ENCODE measurements at regions of chr1 and their contacts with region 1.

Region 1: GRCh38 chr1:48498096-48498791 is 26.2 kb upstream of the SPATA6 start:
- H3K4me3 ChIP-seq: no peak overlapping the region
- H3K27ac ChIP-seq: no peak overlapping the region
- H3K4me1 ChIP-seq: 0 out of 2 replicates have a peak, but pooled peaks cover 3% of the 10 kb centered on the region
- CTCF ChIP-seq: peak; percentile 72

Region 2: DNA sequence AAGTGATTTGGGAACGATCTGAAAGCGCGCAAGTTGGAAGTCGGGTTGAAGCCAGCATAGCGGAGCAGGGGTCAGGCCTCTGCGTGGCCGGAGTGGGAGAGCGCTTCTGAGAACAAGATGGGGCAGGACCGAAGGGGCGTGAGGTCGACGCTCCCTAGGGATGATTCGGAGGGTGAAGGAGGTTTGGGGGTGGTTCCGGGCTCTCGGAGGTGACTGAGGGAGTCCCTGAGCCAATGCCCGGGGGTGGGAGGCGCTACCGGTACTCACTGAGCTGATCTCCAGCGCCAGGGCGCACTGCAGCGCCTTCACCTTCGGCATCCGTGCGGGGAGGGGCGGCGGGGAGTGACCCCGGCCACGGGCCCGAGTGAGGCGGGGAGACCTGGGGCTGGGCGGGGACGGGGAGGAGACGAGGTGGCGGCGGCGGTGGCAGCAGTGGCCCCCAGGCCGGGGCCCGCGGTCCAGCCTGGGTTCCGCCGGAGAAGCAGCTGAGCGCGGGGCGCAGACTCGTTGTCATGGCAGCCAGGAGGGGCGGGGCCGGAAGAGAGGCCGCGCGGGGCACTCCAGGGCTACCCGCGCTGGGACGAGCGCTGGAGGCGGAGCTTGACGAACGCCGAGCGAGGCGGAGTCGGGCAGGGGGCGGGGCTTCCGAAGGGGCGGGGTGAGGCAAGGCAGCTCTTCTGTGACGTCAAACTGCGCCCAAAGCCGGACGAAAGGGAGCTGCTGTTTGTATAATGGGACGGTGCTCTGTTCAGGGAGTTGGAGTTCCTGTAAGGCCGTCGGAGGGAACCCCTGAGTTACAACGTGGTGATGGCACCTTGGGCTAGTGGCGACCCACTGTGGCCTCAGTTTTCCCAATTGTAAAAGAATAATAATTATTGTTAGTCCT is 26.3 kb before region 1 on chr1 and contains the start of gene SPATA6:
- CTCF ChIA-PET with region 1: interaction called, 21 read pairs
- POLR2A ChIA-PET with region 1: interaction called, 6 read pairs
- H3K4me3 ChIP-seq: peak within 1 kb of the TSS; percentile 78
- H3K27ac ChIP-seq: peak within 1 kb of the TSS; percentile 42; the same call in 1 of the 2 replicates
- H3K4me1 ChIP-seq: no peaks in the 10 kb centered on the region; the same call in 1 of the 2 replicates
- CTCF ChIP-seq: peak; percentile 51

Region 3: GRCh38 chr1:48480504-48480903 is 17.7 kb before region 1 on chr1:
- CTCF ChIA-PET with region 1: interaction called, 11 read pairs
- POLR2A ChIA-PET with region 1: no interaction called
- H3K4me3 ChIP-seq: no peak overlapping the region
- H3K27ac ChIP-seq: no peak overlapping the region
- H3K4me1 ChIP-seq: peaks cover 4% of the 10 kb centered on the region; the same call in 1 of the 2 replicates
- CTCF ChIP-seq: no peak

Region 4: GRCh38 chr1:48530727-48531351 is 32.6 kb after region 1 on chr1:
- CTCF ChIA-PET with region 1: interaction called, 27 read pairs
- POLR2A ChIA-PET with region 1: no interaction called
- H3K4me3 ChIP-seq: no peak overlapping the region
- H3K27ac ChIP-seq: no peak overlapping the region
- H3K4me1 ChIP-seq: no peaks in the 10 kb centered on the region
- CTCF ChIP-seq: peak; percentile 69; the same call in 1 of the 2 replicates

Region 5: DNA sequence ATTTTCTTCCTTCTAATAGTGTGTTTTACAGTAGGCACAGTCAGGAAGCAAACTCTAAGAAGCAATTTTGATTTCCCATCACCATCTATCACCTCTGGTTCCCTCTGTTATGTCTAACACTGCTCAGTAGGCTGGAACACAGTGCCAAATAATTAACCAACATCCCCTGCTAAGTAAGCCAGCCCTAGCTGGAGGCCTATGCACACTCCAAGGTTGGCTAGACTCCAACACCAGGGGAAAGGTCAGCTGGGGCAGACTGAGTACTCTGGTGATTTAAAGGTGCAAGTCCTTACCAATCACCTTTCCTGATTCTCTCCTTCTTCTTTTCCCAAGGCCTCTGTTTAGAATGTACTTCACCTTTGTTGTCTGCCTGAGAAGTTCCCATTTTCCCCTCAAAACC is 324.9 kb after region 1 on chr1:
- CTCF ChIA-PET with region 1: no interaction called
- POLR2A ChIA-PET with region 1: no interaction called
- H3K4me3 ChIP-seq: no peak overlapping the region
- H3K27ac ChIP-seq: no peak overlapping the region
- H3K4me1 ChIP-seq: no peaks in the 10 kb centered on the region
- CTCF ChIP-seq: no peak